ENCODE measurements at regions of chr9 and their contacts with region 1.

Region 1: GRCh38 chr9:129131300-129132145 is 20.3 kb downstream of the PTPA start:
- DNase-seq: peak; percentile 88
- H3K4me3 Mint-ChIP-seq: no peak overlapping the region
- H3K27ac Mint-ChIP-seq: peak overlapping the region; percentile 76
- H3K4me1 Mint-ChIP-seq: peaks cover 6% of the 10 kb centered on the region
- H3K27me3 Mint-ChIP-seq: no peaks in the 10 kb centered on the region

Region 2: GRCh38 chr9:129111528-129112151 is 19.9 kb before region 1 on chr9:
- CTCF ChIA-PET with region 1: interaction called, 13 read pairs
- POLR2A ChIA-PET with region 1: no interaction called
- DNase-seq: peak; percentile 38
- H3K4me3 Mint-ChIP-seq: peak overlapping the region; percentile 97
- H3K27ac Mint-ChIP-seq: peak overlapping the region; percentile 97
- H3K4me1 Mint-ChIP-seq: peaks cover 41% of the 10 kb centered on the region
- H3K27me3 Mint-ChIP-seq: no peaks in the 10 kb centered on the region

Region 3: DNA sequence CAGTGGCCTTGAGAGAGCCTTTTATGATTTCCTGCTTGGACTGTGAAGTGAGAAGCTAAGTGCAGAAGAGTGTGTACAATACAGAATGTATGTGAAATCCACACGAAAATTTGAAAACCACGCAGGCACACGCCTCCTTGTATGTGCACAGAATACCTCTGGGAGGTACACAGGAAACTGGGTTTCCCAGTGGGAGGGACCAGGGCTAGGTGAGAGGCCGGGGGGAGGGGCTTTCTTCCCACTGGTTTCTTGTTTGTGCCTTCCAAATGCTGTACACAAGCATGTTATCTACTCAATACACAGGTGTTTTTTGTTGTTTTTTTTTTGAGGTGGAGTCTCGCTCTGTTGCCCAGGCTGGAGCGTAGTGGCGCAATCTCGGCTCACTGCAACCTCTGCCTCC is 473.2 kb after region 1 on chr9:
- CTCF ChIA-PET with region 1: interaction called, 20 read pairs
- POLR2A ChIA-PET with region 1: no interaction called
- DNase-seq: no peak
- H3K4me3 Mint-ChIP-seq: no peak overlapping the region
- H3K27ac Mint-ChIP-seq: peak overlapping the region; percentile 79
- H3K4me1 Mint-ChIP-seq: peaks cover 56% of the 10 kb centered on the region
- H3K27me3 Mint-ChIP-seq: no peaks in the 10 kb centered on the region

Region 4: GRCh38 chr9:129610473-129611301 is 479.2 kb after region 1 on chr9:
- CTCF ChIA-PET with region 1: interaction called, 20 read pairs
- POLR2A ChIA-PET with region 1: no interaction called
- DNase-seq: peak; percentile 72
- H3K4me3 Mint-ChIP-seq: peak overlapping the region; percentile 71
- H3K27ac Mint-ChIP-seq: peak overlapping the region; percentile 75
- H3K4me1 Mint-ChIP-seq: peaks cover 42% of the 10 kb centered on the region
- H3K27me3 Mint-ChIP-seq: peaks cover under 1% of the 10 kb centered on the region

Region 5: DNA sequence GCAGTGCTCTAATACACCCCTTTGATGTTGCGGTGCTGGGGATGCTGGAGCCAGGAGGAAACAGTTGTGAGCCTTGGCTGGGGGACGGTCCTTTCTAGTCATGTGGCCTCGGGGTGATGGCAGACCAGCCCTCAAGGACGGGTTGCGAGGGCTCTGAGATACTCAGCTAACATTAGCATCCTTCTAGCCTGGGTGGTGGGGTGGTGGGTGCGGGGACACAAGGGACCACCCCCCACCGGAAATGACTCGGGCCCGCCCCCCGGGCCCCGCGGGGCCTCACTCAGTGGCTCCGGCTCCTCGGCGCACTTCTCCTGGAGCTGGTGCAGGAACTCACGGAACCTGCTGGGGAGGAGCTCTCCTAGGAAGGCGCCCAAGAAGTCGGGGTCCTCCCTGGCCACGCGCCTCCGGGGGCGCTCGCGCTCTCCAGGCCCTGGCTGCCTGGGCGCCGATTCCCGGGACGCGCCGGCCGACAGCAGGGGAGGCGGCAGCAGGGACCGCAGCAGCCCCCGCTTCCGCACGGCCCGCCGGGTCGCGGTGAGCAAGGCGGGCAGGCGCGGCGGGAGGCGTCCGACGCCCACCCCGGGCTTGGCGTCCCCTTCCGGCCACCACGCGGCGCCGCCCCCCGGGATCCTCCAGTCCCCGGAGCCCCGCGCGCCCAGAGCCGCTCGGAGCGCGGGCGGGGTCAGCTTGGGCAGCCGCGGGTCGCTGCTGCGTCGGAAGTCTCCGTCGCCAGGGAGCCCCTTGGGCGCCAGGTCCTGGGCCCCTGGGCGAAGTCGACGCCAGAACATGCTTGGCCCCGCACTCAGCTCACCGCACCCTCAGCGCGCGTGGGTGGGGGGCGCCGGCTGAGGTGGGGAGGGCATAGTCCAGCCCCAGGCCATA is 488.5 kb after region 1 on chr9:
- CTCF ChIA-PET with region 1: interaction called, 45 read pairs
- POLR2A ChIA-PET with region 1: interaction called, 4 read pairs
- DNase-seq: no peak
- H3K4me3 Mint-ChIP-seq: no peak overlapping the region
- H3K27ac Mint-ChIP-seq: no peak overlapping the region
- H3K4me1 Mint-ChIP-seq: peaks cover 13% of the 10 kb centered on the region
- H3K27me3 Mint-ChIP-seq: peaks cover 32% of the 10 kb centered on the region

Region 6: DNA sequence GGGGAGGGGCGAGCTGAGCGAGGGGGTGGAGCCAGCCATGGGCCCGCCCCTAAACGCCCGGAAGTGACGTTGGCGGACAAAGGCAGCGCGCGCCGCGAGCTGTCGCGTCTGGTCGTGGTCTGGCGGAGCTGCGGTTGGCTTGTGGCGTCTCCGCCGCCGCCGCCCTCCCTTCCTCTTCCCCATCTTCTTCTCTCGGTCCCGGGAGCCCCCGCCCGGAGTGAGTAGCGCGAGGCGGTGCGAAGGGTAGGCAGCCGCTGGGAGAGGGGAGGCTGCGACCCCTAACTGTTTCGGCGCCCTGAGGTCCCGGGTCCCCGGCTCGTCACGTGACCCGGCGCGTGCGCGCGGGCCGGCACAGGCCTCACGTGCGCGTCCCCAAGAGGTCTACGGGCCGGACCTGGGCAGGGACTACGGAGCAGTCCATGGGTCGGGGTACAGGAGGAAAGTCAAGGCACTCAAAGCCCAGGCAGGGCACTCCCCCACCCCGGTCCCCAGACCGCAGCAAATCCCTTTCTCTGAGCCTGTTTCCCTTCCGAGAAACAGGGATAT is 494.6 kb after region 1 on chr9 and contains the start of gene NTMT1:
- CTCF ChIA-PET with region 1: interaction called, 45 read pairs
- POLR2A ChIA-PET with region 1: interaction called, 4 read pairs
- DNase-seq: peak; percentile 88
- H3K4me3 Mint-ChIP-seq: peak within 1 kb of the TSS; percentile 88
- H3K27ac Mint-ChIP-seq: peak within 1 kb of the TSS; percentile 99
- H3K4me1 Mint-ChIP-seq: peaks cover 54% of the 10 kb centered on the region
- H3K27me3 Mint-ChIP-seq: peaks cover 5% of the 10 kb centered on the region
- total RNA-seq, gene NTMT1: 28.5 to 33.9 TPM